ENCODE measurements at regions of chr10 and their contacts with region 1.

Region 1: GRCh38 chr10:96513698-96514561 is at the start of gene TLL2:
- DNase-seq: peak; percentile 81 to 87 (median 87)
- ATAC-seq: peak; percentile 91 to 96 (median 94)
- H3K4me3 ChIP-seq: peak within 1 kb of the TSS; percentile 30 to 48 (median 40)
- H3K27ac ChIP-seq: no peak within 1 kb of the TSS
- H3K4me1 ChIP-seq: peaks cover 0 to 22% (median 4%) of the 10 kb centered on the region in 4 donors
- H3K27me3 ChIP-seq: no peaks in the 10 kb centered on the region
- CTCF ChIP-seq: peak; percentile 55 to 69 (median 62)
- POLR2A ChIP-seq: no peak
- total RNA-seq, gene TLL2: 0.11 to 0.14 TPM in 2 of 6 experiments, not detected in the others

Region 2: GRCh38 chr10:96374985-96375830 is 138.7 kb before region 1 on chr10:
- intact Hi-C with region 1: loop called in 1 of 2 experiments (anchors 5 kb)
- DNase-seq: peak; percentile 85 to 90 (median 88)
- ATAC-seq: peak; percentile 97 to 99 (median 98)
- H3K4me3 ChIP-seq: peak overlapping the region; percentile 35 to 55 (median 36)
- H3K27ac ChIP-seq: no peak overlapping the region
- H3K4me1 ChIP-seq: peaks cover 0 to 6% (median 0%) of the 10 kb centered on the region in 4 donors
- H3K27me3 ChIP-seq: no peaks in the 10 kb centered on the region
- CTCF ChIP-seq: peak; percentile 90 to 100 (median 100)
- POLR2A ChIP-seq: no peak

Region 3: DNA sequence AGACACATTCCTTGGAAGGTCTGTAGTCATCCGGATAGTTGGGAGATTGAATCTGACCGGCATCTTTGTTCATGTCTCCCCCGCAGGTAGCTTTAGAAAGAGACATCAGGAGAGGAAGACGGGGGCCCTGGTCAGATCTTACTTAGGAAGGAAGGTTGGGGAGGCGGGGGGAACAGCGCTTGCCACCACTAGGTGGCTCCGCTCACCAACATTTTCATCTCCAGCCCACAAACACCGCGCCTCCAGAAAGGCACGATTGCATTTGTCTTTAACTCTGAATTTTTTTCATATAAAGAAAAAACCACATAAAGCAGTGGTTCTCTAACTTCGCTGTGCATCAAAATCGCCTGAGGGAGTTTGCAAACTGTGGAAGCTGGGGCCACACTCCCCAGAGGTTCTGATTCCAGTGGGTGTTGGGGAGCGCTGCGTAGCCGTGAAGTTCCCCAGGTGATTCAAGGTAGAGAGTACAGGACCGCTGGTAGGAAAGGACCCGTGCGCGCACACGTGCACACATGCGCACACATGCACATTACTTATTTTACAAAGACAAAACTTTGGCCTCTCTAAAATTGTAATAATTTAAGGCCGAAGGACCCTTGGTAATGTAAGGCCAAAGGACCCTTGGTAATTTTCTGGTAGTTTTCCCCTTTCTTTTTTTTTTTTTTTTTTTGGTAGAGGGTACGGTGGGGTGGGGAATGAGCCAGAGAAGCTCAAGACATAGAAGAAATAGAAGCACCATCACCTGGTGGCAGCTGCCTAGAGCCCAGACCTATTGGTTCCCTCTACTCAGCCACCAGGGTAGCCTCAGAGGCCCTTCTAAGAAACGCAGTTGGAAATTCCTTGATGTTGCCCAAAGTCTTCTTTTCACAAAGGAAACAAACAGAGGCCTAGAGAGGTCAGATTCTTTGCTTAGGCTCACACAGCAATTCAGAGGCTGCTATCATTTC is 117.7 kb before region 1 on chr10:
- intact Hi-C with region 1: loop called in 1 of 2 experiments (anchors 5 kb)
- DNase-seq: peak; percentile 61 to 66 (median 65)
- ATAC-seq: peak; percentile 90 to 98 (median 96)
- H3K4me3 ChIP-seq: no peak overlapping the region
- H3K27ac ChIP-seq: no peak overlapping the region
- H3K4me1 ChIP-seq: no peaks in the 10 kb centered on the region
- H3K27me3 ChIP-seq: no peaks in the 10 kb centered on the region
- CTCF ChIP-seq: peak; percentile 80 to 89 (median 86)
- POLR2A ChIP-seq: no peak

Region 4: GRCh38 chr10:96470116-96470743 is 43.7 kb before region 1 on chr10:
- intact Hi-C with region 1: no loop called
- DNase-seq: no peak
- ATAC-seq: peak; percentile 40 to 69 (median 62)
- H3K4me3 ChIP-seq: no peak overlapping the region
- H3K27ac ChIP-seq: no peak overlapping the region
- H3K4me1 ChIP-seq: no peaks in the 10 kb centered on the region
- H3K27me3 ChIP-seq: no peaks in the 10 kb centered on the region
- CTCF ChIP-seq: peak in 3 of 4 donors; percentile 24 to 50 (median 37)
- POLR2A ChIP-seq: no peak

Measured in right lobe of liver (tissue), 6 donors.